ENCODE measurements at regions of chr9 and their contacts with region 1.

Region 1: GRCh38 chr9:106921341-106921899 is 58.5 kb downstream of the ZNF462 start:
- DNase-seq: no peak
- ATAC-seq: peak; percentile 91

Region 2: DNA sequence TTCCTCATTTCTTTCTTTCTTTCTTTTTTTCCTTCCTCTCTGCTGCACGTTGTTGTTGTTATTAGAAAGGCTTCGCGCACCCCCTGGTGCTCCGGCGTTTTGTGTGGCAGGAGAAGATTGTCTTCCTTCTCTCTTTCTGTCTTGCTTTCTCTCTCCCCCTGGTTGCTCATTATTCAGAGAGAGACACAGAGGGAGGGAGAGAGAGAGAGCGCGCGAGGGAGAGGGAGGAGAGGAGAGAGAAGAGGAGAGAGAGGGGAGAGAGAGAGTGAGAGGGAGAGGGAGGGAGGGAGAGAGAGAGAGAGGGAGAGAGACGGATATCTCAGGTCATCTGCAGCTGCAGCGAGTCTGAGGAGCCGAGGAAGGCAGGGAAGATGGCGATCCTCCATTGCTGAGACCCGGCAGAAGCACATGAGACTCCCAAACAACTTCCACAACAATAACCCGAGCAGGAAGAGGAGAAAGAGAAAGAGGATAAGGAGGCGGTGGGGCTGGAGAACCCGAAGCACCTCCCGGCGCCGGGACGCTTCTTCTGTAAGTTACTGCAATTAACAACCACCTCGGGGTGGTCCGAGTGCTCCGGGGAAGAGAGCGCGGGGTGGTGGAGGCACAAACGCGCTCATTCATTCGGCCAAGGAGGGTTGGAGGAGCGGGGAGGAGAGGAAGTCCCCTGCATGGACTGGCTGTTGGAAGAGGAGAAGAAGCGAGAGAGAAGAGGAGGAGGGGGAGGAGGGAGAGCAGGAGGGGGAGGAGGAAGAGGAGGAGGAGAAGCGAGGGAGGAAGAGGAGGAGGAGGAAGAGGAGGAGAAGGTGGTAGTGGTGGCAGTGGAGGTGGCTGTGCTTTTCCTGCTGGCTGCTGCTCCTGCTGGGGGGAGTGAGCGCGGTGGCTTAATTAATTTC is 58.3 kb before region 1 on chr9 and contains the start of gene ZNF462:
- intact Hi-C with region 1: loop called (anchors 10 kb)
- DNase-seq: peak; percentile 66
- ATAC-seq: peak; percentile 76
- total RNA-seq, gene ZNF462: 51.1 TPM

Region 3: DNA sequence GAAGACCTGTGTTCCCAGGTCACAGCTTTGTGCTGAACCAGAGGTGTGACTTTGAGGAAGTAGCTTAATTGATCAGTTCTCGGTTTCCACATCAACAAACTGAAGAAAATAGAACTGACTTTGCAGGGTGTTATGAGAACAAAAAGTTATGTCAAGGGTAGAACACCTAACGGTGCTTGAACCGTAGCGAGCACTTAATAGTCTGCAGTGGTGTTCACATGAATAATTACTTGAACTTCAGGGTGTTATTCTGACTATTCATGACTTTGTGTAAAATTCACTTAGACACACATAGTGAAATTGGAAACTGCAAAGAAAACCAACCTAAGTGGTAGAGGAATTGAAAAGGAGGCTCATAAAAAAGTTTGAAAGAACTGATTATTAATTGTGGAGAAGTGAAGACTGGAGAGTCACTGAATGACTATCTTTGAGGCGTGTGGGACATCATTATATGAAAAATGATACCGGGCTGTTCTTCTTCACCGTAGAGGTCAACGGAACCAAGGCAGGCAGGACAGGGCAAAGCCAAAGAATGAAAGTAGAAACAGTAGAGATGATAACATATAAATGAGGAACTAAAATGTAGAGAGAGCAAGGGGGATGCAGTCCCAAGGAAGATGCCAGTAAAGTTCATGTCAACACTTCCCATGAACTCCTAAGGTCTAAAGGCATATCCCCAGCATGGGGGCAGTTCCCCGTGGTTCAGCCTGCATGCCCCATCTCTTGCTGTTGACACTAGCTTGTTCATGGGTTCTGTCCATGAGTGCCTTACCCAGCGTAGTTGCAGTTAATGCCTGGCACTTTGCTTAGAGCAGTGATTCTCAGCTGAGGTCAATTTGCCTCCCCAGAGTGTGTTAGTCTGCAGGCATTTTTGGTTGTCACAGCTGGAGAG is 60.2 kb after region 1 on chr9:
- intact Hi-C with region 1: no loop called
- DNase-seq: no peak
- ATAC-seq: no peak